HEK293T (cell line): ENCODE measurements at regions of chr10 and their contacts with region 1.

Region 1: DNA sequence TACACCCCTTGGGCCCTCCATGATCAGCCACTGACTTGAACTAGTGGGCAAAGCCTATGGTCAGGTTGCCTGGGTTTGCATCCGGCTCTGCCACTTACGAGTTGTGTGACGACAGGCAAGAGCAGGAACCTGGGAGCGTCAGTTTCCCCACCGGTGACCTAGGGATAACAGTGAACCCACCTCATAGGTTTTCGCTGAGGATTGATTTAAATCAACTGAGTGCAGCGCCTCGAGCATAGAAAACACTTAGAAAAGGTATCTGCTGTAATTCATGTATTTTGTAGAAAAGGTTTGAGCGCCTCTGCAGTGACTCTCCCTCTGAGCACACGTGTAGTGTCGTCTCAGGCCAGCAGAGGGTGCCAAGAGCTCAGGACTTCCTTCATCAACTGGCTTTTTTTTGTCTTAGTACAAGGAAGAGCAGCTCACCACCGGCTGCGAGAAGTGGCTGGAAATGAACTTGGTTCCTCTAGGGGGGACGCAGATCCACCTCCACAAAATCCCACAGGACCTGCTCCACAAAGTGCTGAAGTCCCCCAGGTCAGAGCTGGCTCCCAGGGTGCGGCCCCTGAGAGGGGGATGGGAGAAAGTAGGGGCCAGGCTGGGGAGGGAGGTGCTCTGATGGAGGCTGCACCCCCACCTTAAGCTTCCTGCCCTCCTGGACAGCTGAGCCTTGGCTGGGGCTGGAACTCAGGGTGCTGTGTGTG is 27.7 kb downstream of the BTBD16 start:
- DNase-seq: peak; percentile 89

Region 2: DNA sequence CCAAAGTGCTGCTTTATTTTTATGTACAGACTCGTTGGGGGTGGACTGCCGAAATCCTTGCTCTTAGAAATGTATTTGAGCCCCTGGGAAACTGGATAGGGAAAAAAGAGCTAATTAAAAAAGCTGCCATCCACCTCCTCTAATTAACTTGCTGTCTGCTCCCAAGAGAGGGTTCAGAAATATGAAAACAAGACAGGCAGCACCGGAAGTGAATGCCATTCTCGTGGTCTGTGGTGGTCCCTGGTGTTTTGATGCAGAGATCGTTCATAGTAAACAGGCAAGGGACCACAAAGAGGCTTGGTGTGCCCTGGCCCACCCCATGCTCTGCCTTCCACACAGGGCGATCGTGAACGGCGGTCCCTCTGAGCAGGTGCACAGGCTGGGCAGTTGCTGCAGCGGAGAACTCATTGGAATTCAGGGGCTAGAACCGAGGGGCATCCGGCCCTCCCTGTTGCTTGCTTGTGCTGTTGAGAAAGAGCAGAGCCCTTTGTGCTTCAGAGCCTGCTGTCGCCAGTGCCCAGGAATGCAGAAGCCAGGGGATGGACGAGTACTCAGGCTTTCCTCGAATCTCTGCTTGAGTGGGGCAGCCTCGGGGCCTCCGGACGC is 106.7 kb before region 1 on chr10:
- CTCF ChIA-PET with region 1: no interaction called
- POLR2A ChIA-PET with region 1: no interaction called
- DNase-seq: no peak

Region 3: DNA sequence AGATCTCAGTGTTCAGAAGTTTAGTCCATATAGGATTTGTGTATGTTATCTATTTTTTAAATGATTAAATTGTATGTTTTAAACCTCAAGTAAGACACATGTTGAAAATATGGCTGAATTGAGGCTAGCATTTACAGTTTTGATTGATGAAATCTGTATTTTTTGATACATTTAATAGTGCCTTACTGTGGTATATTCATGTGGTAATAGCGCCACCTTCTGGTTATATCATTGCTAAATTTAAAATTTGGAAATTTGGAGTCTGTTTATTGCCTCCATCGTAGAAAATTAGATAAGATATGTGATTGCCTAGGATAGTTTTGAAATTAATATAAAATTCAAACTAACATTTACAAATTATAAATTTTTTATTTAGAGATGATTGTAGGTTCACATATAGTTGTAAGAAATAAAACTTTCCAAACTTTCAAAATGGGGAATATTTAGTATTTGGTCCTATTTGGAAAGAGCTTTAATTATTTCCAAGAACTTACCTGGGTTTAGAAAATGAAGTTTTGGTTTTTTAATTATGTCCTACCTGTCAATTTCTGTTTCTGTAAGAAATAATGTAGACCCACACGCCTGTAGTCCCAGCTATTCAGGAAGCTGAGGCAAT is 136.6 kb after region 1 on chr10:
- CTCF ChIA-PET with region 1: interaction called, 38 read pairs
- POLR2A ChIA-PET with region 1: no interaction called
- DNase-seq: no peak

Region 4: DNA sequence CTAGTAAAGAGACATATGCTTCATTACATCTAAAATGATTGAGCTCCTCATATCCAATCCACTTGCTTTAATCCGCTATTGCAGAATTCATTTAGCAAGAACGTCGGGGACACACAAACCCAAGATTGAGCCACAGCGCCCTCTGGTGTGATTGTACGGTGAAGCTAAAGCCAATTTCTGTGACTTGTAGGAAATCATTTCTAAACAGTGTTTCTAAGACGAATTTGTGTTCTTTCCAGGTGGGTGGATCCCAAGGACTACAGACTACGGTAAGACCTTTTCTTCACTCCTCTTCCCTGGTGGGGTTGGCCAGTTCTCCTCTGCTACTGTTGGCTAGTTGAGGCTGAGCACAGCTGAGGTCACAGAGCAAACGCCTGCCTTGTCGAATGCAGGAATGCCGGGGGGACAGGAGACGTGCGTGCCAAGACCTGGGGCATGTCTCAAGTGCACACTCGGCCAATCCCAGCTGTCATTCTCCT is 267.0 kb after region 1 on chr10:
- CTCF ChIA-PET with region 1: interaction called, 12 read pairs
- POLR2A ChIA-PET with region 1: no interaction called
- DNase-seq: peak; percentile 69